ENCODE measurements at regions of chr3 and their contacts with region 1.

Region 1: DNA sequence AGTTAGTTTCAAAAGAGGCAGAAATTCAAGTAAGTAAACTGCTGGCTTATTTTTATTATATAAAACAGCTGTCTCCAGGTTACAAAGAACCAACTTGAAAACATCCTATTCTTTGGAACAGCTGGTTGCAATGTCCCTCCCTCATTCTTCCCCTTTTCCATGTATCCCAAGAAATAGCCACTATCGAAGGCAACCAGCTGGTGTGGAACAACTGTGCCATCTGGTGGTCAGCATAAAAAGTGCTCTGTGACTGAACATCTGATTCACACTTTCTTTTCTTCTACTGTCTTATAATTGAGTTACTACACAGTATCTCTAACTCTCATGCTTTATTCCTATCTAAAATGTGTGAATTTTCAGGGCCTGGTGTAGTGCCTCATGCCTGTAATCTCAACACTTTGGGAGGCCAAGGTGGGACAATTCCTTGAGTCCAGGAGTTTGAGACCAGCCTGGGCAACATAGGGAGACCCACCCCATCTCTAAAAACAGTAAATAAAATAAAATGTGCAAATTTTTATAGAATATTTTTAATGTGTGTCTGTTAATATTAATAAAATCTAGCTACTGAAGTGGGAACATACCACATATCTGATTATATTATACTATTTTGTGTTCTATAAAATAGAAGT is 9.6 kb downstream of the OSBPL11 start:
- DNase-seq: peak in 8 of 9 donors; percentile 7 to 45 (median 24)
- ATAC-seq: peak; percentile 67
- H3K4me3 ChIP-seq: no peak overlapping the region
- H3K4me3 Mint-ChIP-seq: peak overlapping the region in 2 of 10 donors; percentile 17 to 33
- H3K27ac ChIP-seq: no peak overlapping the region
- H3K27ac Mint-ChIP-seq: peak overlapping the region in 1 of 9 donors; percentile 3
- H3K4me1 ChIP-seq: peaks cover 0 to 4% of the 10 kb centered on the region in 2 donors
- H3K4me1 Mint-ChIP-seq: peaks cover 10 to 41% (median 26%) of the 10 kb centered on the region in 7 donors
- H3K27me3 ChIP-seq: no peaks in the 10 kb centered on the region
- H3K27me3 Mint-ChIP-seq: no peaks in the 10 kb centered on the region

Region 2: GRCh38 chr3:124761250-124761796 is 824.4 kb before region 1 on chr3:
- CTCF ChIA-PET with region 1: interaction called, 3 read pairs
- POLR2A ChIA-PET with region 1: no interaction called
- intact Hi-C with region 1: loop called (anchors 1 to 5 kb)
- DNase-seq: peak; percentile 52 to 76 (median 68)
- ATAC-seq: peak; percentile 92
- H3K4me3 ChIP-seq: no peak overlapping the region
- H3K4me3 Mint-ChIP-seq: peak overlapping the region in 9 of 10 donors; percentile 16 to 84 (median 72)
- H3K27ac ChIP-seq: no peak overlapping the region
- H3K27ac Mint-ChIP-seq: peak overlapping the region in 3 of 9 donors; percentile 5 to 92 (median 65)
- H3K4me1 ChIP-seq: no peaks in the 10 kb centered on the region
- H3K4me1 Mint-ChIP-seq: peaks cover 0 to 7% (median 5%) of the 10 kb centered on the region in 7 donors
- H3K27me3 ChIP-seq: no peaks in the 10 kb centered on the region
- H3K27me3 Mint-ChIP-seq: peaks cover 0 to 1% (median 0%) of the 10 kb centered on the region in 5 donors

Region 3: DNA sequence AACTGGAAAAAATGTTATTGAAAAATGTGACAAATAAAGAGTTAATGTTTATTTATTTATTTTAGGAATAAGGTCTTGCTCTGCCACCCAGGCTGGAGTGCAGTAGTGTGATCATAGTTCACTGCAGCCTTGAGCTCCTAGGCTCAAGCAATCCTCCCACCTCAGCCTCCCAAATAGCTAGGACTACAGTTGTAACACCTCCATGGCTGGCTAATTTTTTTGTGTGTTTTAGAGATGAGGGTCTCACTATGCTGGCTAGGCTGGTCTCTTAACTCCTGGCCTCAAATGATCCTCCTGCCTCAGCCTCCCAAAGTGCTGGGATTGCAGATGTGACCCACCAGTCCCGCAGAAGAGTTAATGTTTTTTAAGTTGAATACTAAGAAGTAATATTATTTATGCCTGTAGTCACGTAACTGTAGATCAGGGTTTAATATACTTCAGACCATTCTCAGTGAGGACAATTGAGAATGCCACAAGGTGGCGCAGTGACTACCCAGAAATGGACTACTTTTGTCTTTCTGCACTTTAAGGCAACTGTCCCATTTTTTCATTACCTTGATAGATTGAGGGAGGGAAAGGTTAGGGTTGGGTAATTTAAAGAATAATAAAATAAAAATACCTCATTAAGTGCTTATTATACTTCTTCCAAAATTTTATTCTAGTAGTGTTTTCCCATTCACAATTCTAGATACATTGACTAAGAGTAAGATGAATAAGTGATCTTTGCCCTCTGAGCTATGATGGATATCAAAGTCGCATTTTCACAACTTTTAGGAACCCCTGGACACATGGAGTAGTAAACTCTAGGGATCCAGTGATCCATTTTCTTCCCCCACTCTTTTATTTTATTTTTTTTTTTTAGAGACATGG is 657.1 kb before region 1 on chr3:
- CTCF ChIA-PET with region 1: interaction called, 3 read pairs
- POLR2A ChIA-PET with region 1: no interaction called
- intact Hi-C with region 1: loop called (anchors 1 kb)
- DNase-seq: peak; percentile 19 to 61 (median 37)
- ATAC-seq: peak; percentile 79
- H3K4me3 ChIP-seq: no peak overlapping the region
- H3K4me3 Mint-ChIP-seq: no peak overlapping the region
- H3K27ac ChIP-seq: no peak overlapping the region
- H3K27ac Mint-ChIP-seq: peak overlapping the region in 2 of 9 donors; percentile 18 to 49
- H3K4me1 ChIP-seq: no peaks in the 10 kb centered on the region
- H3K4me1 Mint-ChIP-seq: peaks cover 0 to 8% (median 0%) of the 10 kb centered on the region in 7 donors
- H3K27me3 ChIP-seq: no peaks in the 10 kb centered on the region
- H3K27me3 Mint-ChIP-seq: peaks cover 0 to 57% (median 11%) of the 10 kb centered on the region in 5 donors

Region 4: DNA sequence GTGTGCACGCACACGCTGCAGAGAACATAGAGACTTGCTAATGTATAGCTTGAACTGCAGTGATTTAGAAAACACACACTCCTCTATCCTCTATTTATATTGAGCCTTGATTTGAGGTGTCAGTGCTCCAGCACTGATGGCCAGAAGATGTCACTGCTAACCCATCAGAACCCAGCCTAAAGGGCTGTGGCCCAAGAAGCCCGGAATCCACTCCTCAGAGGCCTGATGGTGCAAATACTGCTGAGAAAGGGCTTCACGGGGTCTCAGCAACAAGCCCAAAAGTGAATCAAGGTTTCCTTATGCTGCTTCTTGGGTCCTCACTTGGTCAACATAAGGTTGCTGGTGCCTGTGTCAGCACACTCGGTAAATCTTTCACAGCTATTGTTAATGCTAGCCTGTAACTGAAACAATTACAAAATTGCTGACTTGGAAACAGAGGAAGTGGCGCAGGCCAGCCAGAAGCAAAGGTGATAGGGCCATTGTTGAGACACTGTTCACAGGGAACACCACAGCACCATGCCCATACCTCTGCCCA is 590.2 kb before region 1 on chr3:
- CTCF ChIA-PET with region 1: interaction called, 5 read pairs
- POLR2A ChIA-PET with region 1: no interaction called
- intact Hi-C with region 1: loop called (anchors 1 kb)
- DNase-seq: peak; percentile 28 to 69 (median 47)
- ATAC-seq: peak; percentile 93
- H3K4me3 ChIP-seq: no peak overlapping the region
- H3K4me3 Mint-ChIP-seq: peak overlapping the region in 2 of 10 donors; percentile 7 to 41
- H3K27ac ChIP-seq: no peak overlapping the region
- H3K27ac Mint-ChIP-seq: peak overlapping the region in 7 of 9 donors; percentile 21 to 80 (median 53)
- H3K4me1 ChIP-seq: no peaks in the 10 kb centered on the region
- H3K4me1 Mint-ChIP-seq: peaks cover 0 to 32% (median 19%) of the 10 kb centered on the region in 7 donors
- H3K27me3 ChIP-seq: no peaks in the 10 kb centered on the region
- H3K27me3 Mint-ChIP-seq: no peaks in the 10 kb centered on the region

Region 5: GRCh38 chr3:125150525-125151441 is 434.9 kb before region 1 on chr3:
- CTCF ChIA-PET with region 1: no interaction called
- POLR2A ChIA-PET with region 1: no interaction called
- intact Hi-C with region 1: loop called (anchors 1 to 2 kb)
- DNase-seq: peak in 5 of 9 donors; percentile 30 to 45 (median 43)
- ATAC-seq: peak; percentile 74
- H3K4me3 ChIP-seq: no peak overlapping the region
- H3K4me3 Mint-ChIP-seq: no peak overlapping the region
- H3K27ac ChIP-seq: no peak overlapping the region
- H3K27ac Mint-ChIP-seq: peak overlapping the region in 2 of 9 donors; percentile 45 to 49
- H3K4me1 ChIP-seq: no peaks in the 10 kb centered on the region
- H3K4me1 Mint-ChIP-seq: peaks cover 0 to 28% (median 16%) of the 10 kb centered on the region in 7 donors
- H3K27me3 ChIP-seq: no peaks in the 10 kb centered on the region
- H3K27me3 Mint-ChIP-seq: peaks cover 0 to 37% (median 0%) of the 10 kb centered on the region in 5 donors

Region 6: DNA sequence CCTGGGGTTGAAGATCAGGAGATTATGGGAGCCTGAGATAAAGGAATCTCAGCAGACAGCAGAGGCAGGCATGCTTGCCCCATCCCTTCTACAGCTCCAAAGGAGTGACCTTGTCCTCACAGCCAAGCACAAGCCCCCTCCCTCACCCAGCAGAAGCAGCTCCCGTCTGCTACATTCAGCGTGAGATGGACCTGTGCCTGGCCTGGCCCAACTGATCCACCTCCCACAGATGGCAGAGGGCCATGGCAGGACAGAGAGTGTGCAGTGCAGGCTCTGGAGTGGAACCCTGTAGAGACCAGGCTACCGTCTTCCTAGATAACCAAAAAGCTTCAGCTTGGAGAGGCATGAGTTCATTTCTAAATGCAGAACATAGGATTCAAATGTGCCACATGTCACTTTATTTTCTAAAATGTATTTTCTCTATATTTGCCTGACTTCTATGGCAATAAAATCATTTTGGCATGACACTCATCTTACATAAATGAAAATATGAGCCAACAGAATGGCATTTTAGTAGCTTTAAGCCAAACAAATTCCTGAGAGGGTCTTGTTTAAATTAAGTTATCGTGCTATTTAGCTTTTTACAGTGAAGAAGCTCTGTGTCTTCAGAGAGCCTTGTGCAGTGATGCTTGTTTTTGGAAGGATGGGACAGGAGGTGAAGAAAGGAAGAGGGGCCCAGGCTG is 416.9 kb before region 1 on chr3:
- CTCF ChIA-PET with region 1: no interaction called
- POLR2A ChIA-PET with region 1: no interaction called
- intact Hi-C with region 1: no loop called
- DNase-seq: no peak
- ATAC-seq: no peak
- H3K4me3 ChIP-seq: no peak overlapping the region
- H3K4me3 Mint-ChIP-seq: no peak overlapping the region
- H3K27ac ChIP-seq: no peak overlapping the region
- H3K27ac Mint-ChIP-seq: no peak overlapping the region
- H3K4me1 ChIP-seq: no peaks in the 10 kb centered on the region
- H3K4me1 Mint-ChIP-seq: peaks cover 0 to 6% (median 0%) of the 10 kb centered on the region in 7 donors
- H3K27me3 ChIP-seq: no peaks in the 10 kb centered on the region
- H3K27me3 Mint-ChIP-seq: peaks cover 0 to 32% (median 7%) of the 10 kb centered on the region in 5 donors

Region 7: DNA sequence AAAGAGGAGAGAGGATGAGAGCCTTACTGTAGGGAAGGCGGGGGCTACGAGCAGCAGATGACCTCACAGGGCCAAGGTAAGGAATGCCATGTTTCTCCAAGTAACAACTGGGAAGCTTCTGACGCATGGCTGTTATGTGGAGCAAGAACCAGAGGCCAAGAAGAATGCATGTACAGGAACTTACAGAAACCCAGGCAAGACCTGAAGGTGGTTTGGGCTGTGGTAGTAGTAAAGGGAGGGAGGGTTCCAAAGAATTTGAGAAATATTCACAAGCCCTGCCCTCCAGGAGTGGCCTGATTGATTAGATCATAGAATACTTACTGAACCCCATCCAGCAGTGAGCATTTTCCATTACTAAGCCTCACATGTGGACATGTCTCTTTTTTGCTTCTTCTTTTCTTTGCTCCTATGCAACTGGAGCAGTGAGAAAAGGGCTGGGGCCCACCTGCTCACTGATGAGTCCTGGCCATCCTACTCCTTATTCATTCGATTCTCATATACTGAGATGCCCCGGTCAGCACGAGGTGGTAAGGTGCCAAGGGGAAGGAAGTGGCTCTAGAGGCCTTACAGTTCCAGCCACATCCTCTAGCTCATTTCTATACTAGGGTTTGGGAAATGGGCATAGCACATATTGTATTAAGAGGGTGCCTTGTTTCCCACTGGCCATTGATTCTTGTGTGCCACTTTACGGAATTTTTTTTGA is 364.8 kb before region 1 on chr3:
- CTCF ChIA-PET with region 1: no interaction called
- POLR2A ChIA-PET with region 1: no interaction called
- intact Hi-C with region 1: loop called in 1 of 2 experiments (anchors 10 kb)
- DNase-seq: no peak
- ATAC-seq: peak; percentile 38
- H3K4me3 ChIP-seq: no peak overlapping the region
- H3K4me3 Mint-ChIP-seq: no peak overlapping the region
- H3K27ac ChIP-seq: no peak overlapping the region
- H3K27ac Mint-ChIP-seq: no peak overlapping the region
- H3K4me1 ChIP-seq: no peaks in the 10 kb centered on the region
- H3K4me1 Mint-ChIP-seq: peaks cover 0 to 17% (median 8%) of the 10 kb centered on the region in 7 donors
- H3K27me3 ChIP-seq: no peaks in the 10 kb centered on the region
- H3K27me3 Mint-ChIP-seq: no peaks in the 10 kb centered on the region

Region 8: DNA sequence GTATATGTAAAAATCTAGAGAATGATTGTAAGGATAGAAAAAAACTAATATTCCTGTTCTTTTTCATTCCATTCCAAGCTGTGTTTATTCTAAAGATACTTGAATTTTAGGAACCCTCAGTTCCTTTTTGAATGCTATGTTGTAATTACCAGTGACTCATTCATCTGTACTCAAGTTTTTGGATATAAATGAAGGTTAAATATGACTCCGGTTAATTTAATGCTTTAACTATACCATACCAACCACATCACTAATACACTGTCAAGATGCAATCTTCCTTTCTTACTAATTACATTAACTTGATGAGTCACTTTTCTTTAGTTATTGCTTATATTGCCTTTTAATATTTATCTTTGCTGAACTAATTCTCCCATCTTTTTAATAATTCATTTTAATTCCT is 141.8 kb before region 1 on chr3:
- CTCF ChIA-PET with region 1: interaction called, 4 read pairs
- POLR2A ChIA-PET with region 1: no interaction called
- intact Hi-C with region 1: loop called in 1 of 2 experiments (anchors 10 kb)
- DNase-seq: no peak
- ATAC-seq: no peak
- H3K4me3 ChIP-seq: no peak overlapping the region
- H3K4me3 Mint-ChIP-seq: no peak overlapping the region
- H3K27ac ChIP-seq: no peak overlapping the region
- H3K27ac Mint-ChIP-seq: no peak overlapping the region
- H3K4me1 ChIP-seq: no peaks in the 10 kb centered on the region
- H3K4me1 Mint-ChIP-seq: no peaks in the 10 kb centered on the region
- H3K27me3 ChIP-seq: no peaks in the 10 kb centered on the region
- H3K27me3 Mint-ChIP-seq: no peaks in the 10 kb centered on the region

Region 9: DNA sequence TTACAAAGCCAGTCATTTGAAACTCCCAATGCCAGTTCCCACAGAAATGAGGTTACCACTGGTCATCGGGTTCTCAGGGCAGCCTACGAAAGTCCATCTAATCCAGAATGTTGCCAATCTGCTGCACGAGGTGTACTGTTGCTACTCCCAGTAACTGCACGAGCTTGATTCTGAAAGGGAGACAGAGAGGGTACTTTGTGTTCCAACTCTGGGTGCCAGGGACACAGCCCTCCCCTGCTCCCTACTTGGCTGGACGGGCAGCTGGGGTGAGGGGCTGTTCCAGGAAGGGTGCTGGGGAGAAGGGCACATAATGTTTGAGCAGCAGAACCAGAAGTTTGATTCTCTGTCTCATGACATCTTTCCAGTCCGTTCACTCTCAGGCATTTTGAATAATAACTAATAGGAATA is 36.7 kb after region 1 on chr3:
- CTCF ChIA-PET with region 1: no interaction called
- POLR2A ChIA-PET with region 1: no interaction called
- intact Hi-C with region 1: no loop called
- DNase-seq: no peak
- ATAC-seq: no peak
- H3K4me3 ChIP-seq: no peak overlapping the region
- H3K4me3 Mint-ChIP-seq: no peak overlapping the region
- H3K27ac ChIP-seq: no peak overlapping the region
- H3K27ac Mint-ChIP-seq: no peak overlapping the region
- H3K4me1 ChIP-seq: no peaks in the 10 kb centered on the region
- H3K4me1 Mint-ChIP-seq: no peaks in the 10 kb centered on the region
- H3K27me3 ChIP-seq: no peaks in the 10 kb centered on the region
- H3K27me3 Mint-ChIP-seq: peaks cover under 1 to 9% (median 3%) of the 10 kb centered on the region in 5 donors

Measured in naive thymus-derived CD4-positive, alpha-beta T cell (primary cell).